B cell (primary cell): ENCODE measurements at regions of chr17 and their contacts with region 1.

Region 1: DNA sequence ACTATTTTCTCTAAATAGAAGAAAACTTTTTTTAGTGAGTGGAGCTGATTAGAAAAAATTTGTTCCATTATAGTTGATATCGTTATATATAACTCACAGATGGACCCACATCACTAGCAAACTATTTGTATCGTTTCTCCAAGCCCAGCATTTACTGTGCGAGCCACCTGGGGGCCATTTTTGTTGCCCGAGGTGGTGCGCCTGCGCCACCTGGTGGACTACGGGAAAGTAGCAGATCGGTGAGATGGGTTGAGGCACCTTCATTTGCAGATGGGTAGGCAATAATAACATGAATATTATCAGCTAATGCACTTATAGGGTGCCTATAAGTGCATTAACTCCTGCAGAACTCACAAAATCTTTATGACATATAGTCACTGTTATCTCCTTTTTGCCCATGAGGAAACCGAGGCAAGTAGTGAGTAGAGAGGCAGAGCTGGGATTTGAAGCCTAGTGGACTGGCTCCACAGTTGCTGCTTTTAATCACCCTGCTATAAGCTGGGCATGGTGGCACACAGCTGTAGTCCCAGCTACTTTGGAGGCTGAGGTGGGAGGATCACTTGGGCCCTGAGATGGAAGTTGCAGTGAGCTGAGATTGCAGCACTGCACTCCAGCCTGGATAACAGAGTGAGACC is 23.2 kb upstream of the NTN1 start:
- DNase-seq: peak; percentile 85
- ATAC-seq: peak; percentile 79
- H3K4me3 ChIP-seq: no peak overlapping the region
- H3K4me3 Mint-ChIP-seq: no peak overlapping the region
- H3K27ac ChIP-seq: no peak overlapping the region
- H3K27ac Mint-ChIP-seq: no peak overlapping the region
- H3K4me1 ChIP-seq: peaks cover 17 to 18% of the 10 kb centered on the region in 2 donors
- H3K4me1 Mint-ChIP-seq: peaks cover 22% of the 10 kb centered on the region
- H3K27me3 ChIP-seq: peaks cover 0 to 17% (median 9%) of the 10 kb centered on the region in 4 experiments
- H3K27me3 Mint-ChIP-seq: peaks cover 15% of the 10 kb centered on the region
- CTCF ChIP-seq: peak; percentile 99

Region 2: DNA sequence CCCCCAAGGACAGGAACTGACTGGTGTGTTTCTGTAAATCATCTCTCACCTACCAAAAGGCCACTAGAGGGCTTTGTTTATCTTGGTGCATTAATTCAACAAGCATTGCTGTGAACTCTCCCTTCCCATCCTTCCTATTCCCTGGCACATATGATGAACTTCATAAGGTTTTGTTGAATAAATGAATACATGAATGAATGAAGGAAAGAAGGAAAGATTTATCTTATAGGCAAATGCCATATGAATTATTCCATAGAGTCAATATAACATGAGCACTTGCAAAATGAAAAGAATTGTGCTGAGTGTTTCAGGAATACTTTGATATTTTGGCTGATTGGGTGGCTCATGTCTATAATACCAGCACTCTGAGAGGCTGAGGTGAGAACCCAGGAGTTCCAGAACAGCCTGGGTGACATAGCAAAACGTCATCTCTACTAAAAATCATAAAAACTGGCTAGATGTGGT is 244.1 kb before region 1 on chr17:
- CTCF ChIA-PET with region 1: interaction called, 9 read pairs
- POLR2A ChIA-PET with region 1: no interaction called
- intact Hi-C with region 1: loop called (anchors 1 kb)
- DNase-seq: peak; percentile 37
- ATAC-seq: no peak
- H3K4me3 ChIP-seq: no peak overlapping the region
- H3K4me3 Mint-ChIP-seq: no peak overlapping the region
- H3K27ac ChIP-seq: no peak overlapping the region
- H3K27ac Mint-ChIP-seq: no peak overlapping the region
- H3K4me1 ChIP-seq: no peaks in the 10 kb centered on the region
- H3K4me1 Mint-ChIP-seq: no peaks in the 10 kb centered on the region
- H3K27me3 ChIP-seq: peaks cover 0 to 7% (median 0%) of the 10 kb centered on the region in 4 experiments
- H3K27me3 Mint-ChIP-seq: peaks cover 39% of the 10 kb centered on the region
- CTCF ChIP-seq: peak; percentile 37

Region 3: DNA sequence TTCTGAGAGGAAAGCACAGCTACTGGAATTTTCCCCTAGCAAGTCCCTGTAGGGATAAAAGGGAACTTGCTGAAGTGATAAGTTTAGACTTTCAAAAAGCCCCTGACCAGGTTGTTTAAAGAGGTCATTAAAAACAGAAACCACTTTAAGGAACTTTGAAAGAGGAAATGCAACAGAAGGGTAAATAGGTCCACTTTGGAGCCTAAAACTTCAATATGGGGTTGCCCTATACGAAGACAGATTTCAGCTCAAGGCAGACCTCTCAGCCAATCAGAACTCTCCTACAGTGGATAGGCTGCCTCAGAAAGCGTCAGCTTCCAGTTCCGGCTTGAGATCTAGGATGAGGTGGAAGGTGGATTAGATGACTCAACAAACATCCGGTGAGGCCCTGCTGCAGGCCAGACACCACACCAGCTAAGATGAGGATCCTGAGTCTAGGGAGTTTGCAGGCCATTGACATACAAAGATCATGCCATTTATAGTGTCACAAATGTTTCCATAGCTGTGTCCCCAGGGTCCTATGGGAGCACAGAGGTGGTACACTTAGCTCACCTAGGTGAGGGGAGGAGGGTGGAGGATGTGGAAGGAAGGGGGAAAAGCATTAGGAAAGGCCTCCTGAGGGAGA is 191.1 kb before region 1 on chr17:
- CTCF ChIA-PET with region 1: interaction called, 20 read pairs
- POLR2A ChIA-PET with region 1: no interaction called
- intact Hi-C with region 1: no loop called
- DNase-seq: peak; percentile 88
- ATAC-seq: peak; percentile 89
- H3K4me3 ChIP-seq: peak overlapping the region in 2 of 5 experiments; percentile 10 to 26
- H3K4me3 Mint-ChIP-seq: peak overlapping the region; percentile 76
- H3K27ac ChIP-seq: peak overlapping the region; percentile 95 to 97
- H3K27ac Mint-ChIP-seq: peak overlapping the region; percentile 95
- H3K4me1 ChIP-seq: peaks cover 36 to 42% of the 10 kb centered on the region in 2 donors
- H3K4me1 Mint-ChIP-seq: peaks cover 44% of the 10 kb centered on the region
- H3K27me3 ChIP-seq: no peaks in the 10 kb centered on the region
- H3K27me3 Mint-ChIP-seq: peaks cover 4% of the 10 kb centered on the region
- CTCF ChIP-seq: no peak

Region 4: DNA sequence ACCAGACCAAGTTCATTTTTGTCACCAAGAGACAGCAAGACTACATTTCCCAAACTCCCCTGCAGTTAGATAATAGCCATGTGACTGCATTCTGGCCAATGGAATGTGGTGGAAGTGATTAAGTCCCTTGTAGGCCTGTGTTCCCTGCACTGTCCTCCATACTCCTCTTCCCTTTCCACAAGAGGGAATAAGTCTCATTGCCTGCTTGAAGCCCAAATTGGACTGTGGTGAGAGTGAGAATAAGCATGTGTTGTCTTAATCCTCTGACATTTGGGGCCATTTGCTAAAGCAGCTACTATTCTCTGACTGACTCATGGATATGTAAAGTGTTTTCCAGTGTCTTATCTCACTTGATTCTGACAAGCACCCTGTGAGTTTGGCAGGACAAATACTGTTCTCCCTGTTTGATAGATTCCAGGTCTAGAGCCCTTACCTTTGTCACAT is 151.3 kb before region 1 on chr17:
- CTCF ChIA-PET with region 1: no interaction called
- POLR2A ChIA-PET with region 1: no interaction called
- intact Hi-C with region 1: no loop called
- DNase-seq: no peak
- ATAC-seq: peak; percentile 21
- H3K4me3 ChIP-seq: no peak overlapping the region
- H3K4me3 Mint-ChIP-seq: no peak overlapping the region
- H3K27ac ChIP-seq: no peak overlapping the region
- H3K27ac Mint-ChIP-seq: no peak overlapping the region
- H3K4me1 ChIP-seq: peaks cover 18 to 33% of the 10 kb centered on the region in 2 donors
- H3K4me1 Mint-ChIP-seq: peaks cover 32% of the 10 kb centered on the region
- H3K27me3 ChIP-seq: no peaks in the 10 kb centered on the region
- H3K27me3 Mint-ChIP-seq: peaks cover under 1% of the 10 kb centered on the region
- CTCF ChIP-seq: no peak

Region 5: DNA sequence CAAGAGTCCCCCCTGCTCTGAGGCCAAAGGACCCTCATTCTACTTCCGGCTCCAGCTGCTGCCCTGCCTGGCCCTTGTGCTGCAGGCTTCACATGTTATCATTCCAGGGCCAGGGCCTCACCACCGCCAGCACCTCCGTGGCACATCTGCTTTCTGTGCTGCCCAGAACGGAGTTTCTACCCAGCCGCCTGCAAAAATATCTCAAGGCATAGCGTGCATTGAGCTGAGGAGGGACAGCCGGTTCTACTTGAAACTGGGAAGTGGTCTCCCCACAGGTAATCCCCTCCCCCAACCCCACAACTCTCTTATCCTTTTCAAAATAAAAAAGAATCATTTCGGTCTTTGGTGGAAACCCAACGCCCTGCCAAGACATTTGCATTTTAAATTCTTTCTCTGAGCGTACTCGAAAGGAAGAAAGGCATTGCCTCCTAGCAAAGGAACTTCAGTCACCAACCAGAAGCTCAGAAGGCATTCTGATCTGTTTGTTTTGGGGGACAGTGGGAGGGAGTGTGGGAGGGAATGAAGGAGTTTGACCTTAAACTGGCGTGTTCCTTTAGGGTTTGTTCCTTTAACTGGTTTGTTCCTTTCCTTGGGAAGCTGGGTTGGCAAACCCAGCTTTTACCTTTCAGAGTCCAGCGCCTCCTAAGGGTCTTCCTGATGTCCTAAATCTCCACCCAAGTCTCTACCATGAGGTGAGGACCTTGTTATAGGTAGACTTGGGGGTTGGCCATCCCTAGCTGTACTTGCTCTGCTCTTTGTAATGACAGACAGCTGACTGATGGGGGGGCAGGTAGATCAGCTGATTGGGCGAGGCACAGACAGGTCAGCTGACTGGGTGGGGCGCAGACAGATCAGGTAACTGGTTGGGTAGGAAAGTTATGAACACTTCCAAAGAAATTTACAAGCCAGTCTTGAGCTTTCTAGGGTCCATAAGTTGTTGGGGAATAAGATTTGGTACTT is 97.2 kb before region 1 on chr17:
- CTCF ChIA-PET with region 1: interaction called, 41 read pairs
- POLR2A ChIA-PET with region 1: no interaction called
- intact Hi-C with region 1: no loop called
- DNase-seq: peak; percentile 60
- ATAC-seq: peak; percentile 22
- H3K4me3 ChIP-seq: peak overlapping the region in 1 of 5 experiments; percentile 6
- H3K4me3 Mint-ChIP-seq: peak overlapping the region; percentile 63
- H3K27ac ChIP-seq: peak overlapping the region; percentile 56 to 81
- H3K27ac Mint-ChIP-seq: peak overlapping the region; percentile 86
- H3K4me1 ChIP-seq: peaks cover 48 to 54% of the 10 kb centered on the region in 2 donors
- H3K4me1 Mint-ChIP-seq: peaks cover 60% of the 10 kb centered on the region
- H3K27me3 ChIP-seq: no peaks in the 10 kb centered on the region
- H3K27me3 Mint-ChIP-seq: no peaks in the 10 kb centered on the region
- CTCF ChIP-seq: no peak

Region 6: DNA sequence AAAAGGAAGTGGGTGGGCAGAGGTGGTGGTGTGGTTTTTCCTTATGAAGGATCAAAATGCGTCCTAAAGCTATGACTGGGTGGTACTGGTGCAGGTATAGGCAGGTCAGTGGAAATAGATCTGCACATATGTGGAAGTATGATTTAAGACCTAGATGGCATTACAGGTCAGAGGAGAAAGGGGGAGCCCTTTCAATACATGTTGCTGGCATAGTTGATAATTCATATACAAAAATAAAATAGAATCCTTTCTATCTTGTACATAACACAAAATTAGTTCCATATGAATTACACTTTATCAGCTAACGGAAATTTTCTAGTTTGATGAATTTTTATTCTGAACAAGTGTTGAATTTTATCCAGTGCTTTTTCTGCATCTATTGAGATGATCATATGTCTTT is 11.8 kb before region 1 on chr17:
- CTCF ChIA-PET with region 1: interaction called, 10 read pairs
- POLR2A ChIA-PET with region 1: no interaction called
- intact Hi-C with region 1: no loop called
- DNase-seq: no peak
- ATAC-seq: no peak
- H3K4me3 ChIP-seq: no peak overlapping the region
- H3K4me3 Mint-ChIP-seq: peak overlapping the region; percentile 10
- H3K27ac ChIP-seq: no peak overlapping the region
- H3K27ac Mint-ChIP-seq: peak overlapping the region; percentile 8
- H3K4me1 ChIP-seq: peaks cover 14 to 17% of the 10 kb centered on the region in 2 donors
- H3K4me1 Mint-ChIP-seq: peaks cover 15% of the 10 kb centered on the region
- H3K27me3 ChIP-seq: no peaks in the 10 kb centered on the region
- H3K27me3 Mint-ChIP-seq: peaks cover under 1% of the 10 kb centered on the region
- CTCF ChIP-seq: peak; percentile 24